Activated CD4-positive, alpha-beta T cell treated with anti-CD3 and anti-CD28 coated beads for 36 hours (primary cell): ENCODE measurements at regions of chr11 and their contacts with region 1.

Region 1: DNA sequence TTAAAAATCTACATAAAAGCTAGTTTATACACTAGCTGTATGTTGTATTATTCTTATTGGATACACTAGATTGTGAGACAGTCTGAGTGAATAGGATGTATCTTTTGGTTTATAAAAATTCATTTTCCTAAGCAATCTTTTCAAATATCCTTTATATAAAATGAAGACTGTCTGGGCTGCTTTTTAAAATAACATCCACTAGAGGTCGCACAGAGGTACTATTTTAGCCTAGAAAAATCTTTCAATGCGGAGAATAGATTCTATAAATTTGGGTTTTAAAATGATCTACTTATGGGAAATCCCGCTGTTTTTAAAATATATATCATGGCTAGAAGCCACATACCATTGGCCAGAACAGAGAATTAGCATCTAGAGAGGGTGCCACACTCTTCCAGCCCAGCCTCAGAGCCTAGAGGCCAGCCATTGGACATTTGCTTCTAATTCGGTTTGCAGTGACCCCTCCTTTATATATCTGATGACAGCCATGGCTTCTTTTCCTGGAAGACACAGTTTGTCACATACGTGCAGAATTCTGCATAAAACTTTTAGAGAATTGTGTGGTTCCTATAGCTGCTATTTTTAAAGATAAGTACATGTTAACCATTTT is 7.3 kb downstream of the C11orf97 start:
- DNase-seq: no peak
- ATAC-seq: peak; percentile 30
- H3K4me3 Mint-ChIP-seq: no peak overlapping the region
- H3K27ac Mint-ChIP-seq: no peak overlapping the region
- H3K4me1 Mint-ChIP-seq: no peaks in the 10 kb centered on the region
- H3K27me3 Mint-ChIP-seq: peaks cover 12% of the 10 kb centered on the region

Region 2: DNA sequence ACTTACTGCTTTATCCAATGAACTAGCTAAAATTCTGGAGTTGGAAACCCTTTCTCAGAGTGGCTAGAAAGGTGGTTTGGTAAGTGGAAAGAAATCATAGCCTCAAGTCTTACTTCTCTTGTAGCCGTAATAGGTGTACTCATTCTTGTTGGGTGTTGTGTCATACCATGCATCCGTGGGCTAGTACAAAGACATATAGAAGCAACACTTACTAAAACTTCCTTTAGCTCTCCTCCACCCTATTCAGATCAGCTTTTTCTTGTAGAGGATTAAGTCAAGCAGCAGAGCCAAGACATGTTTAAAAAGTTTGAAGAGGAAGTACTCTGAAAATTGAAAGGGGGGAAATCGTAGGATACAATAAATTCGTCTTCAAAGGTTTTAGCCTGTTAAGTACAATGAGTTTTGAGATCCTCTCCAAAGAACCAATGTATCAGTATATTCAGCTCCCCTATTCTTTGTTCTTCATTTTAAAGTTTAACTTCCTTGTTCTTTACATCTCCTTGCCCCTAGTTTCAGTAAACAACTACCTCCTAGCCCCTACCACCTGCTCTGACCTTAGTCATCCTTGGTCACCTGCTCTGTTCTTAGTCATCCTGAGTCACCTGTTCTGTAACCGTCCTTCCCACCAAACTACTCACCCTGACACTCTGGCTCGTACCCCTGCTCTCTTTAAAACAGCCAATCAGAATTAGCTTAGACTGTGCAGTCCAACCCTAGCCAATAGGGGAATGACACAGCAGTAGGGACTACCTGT is 1251.1 kb before region 1 on chr11:
- CTCF ChIA-PET with region 1: no interaction called
- POLR2A ChIA-PET with region 1: no interaction called
- intact Hi-C with region 1: no loop called
- DNase-seq: no peak
- ATAC-seq: peak; percentile 53
- H3K4me3 Mint-ChIP-seq: no peak overlapping the region
- H3K27ac Mint-ChIP-seq: no peak overlapping the region
- H3K4me1 Mint-ChIP-seq: no peaks in the 10 kb centered on the region
- H3K27me3 Mint-ChIP-seq: peaks cover 3% of the 10 kb centered on the region

Region 3: GRCh38 chr11:94602430-94603372 is 83.1 kb after region 1 on chr11:
- CTCF ChIA-PET with region 1: interaction called, 11 read pairs
- POLR2A ChIA-PET with region 1: no interaction called
- intact Hi-C with region 1: loop called (anchors 1 kb)
- DNase-seq: peak; percentile 76
- ATAC-seq: peak; percentile 92
- H3K4me3 Mint-ChIP-seq: no peak overlapping the region
- H3K27ac Mint-ChIP-seq: no peak overlapping the region
- H3K4me1 Mint-ChIP-seq: peaks cover 2% of the 10 kb centered on the region
- H3K27me3 Mint-ChIP-seq: no peaks in the 10 kb centered on the region